PC-9 (cell line): ENCODE measurements at regions of chr15 and their contacts with region 1.

Region 1: GRCh38 chr15:92444631-92445030 is 51.0 kb downstream of the ST8SIA2 start:
- DNase-seq: no peak
- H3K4me3 ChIP-seq: no peak overlapping the region
- H3K27ac ChIP-seq: no peak overlapping the region
- H3K4me1 ChIP-seq: no peaks in the 10 kb centered on the region
- H3K27me3 ChIP-seq: peaks cover 11% of the 10 kb centered on the region; the same call in 1 of the 2 replicates
- CTCF ChIP-seq: no peak

Region 2: GRCh38 chr15:92123962-92124656 is 320.5 kb before region 1 on chr15:
- CTCF ChIA-PET with region 1: no interaction called
- POLR2A ChIA-PET with region 1: no interaction called
- intact Hi-C with region 1: no loop called
- DNase-seq: no peak
- H3K4me3 ChIP-seq: no peak overlapping the region
- H3K27ac ChIP-seq: no peak overlapping the region
- H3K4me1 ChIP-seq: no peaks in the 10 kb centered on the region
- H3K27me3 ChIP-seq: no peaks in the 10 kb centered on the region
- CTCF ChIP-seq: no peak

Region 3: DNA sequence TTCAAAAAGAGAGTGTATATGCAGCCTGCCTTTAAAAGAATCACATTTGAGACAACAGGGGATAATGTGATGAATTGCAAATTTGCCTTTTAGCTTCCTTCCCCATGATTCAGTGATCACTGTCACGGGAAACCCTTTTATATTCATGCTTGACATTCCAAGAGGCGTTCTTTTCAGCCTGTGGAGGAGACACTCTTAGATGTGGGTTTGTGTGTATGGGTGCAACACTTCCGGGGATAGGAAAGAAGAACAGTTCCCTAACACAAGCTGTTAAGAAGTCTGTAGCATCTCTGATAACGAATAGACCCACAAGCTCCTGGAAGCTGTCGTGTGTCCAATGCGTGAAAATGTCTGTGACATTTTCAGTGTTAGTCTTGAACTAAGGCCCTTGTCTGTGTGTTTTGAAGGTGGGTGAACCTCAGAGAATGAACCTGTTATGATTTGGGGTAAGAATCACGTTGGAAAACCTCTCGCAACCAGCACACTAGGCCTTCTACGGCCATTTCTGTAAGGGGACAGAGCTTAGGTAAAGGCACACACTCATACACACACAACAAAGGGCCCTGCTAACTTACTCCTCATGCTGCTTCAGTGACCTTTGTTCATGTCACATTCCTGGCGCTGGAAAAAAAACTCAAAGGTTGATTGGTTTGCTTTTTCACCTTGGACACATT is 280.2 kb before region 1 on chr15:
- CTCF ChIA-PET with region 1: no interaction called
- POLR2A ChIA-PET with region 1: no interaction called
- intact Hi-C with region 1: no loop called
- DNase-seq: no peak
- H3K4me3 ChIP-seq: no peak overlapping the region
- H3K27ac ChIP-seq: no peak overlapping the region
- H3K4me1 ChIP-seq: no peaks in the 10 kb centered on the region
- H3K27me3 ChIP-seq: no peaks in the 10 kb centered on the region
- CTCF ChIP-seq: no peak

Region 4: GRCh38 chr15:92398926-92399610 is 45.6 kb before region 1 on chr15:
- CTCF ChIA-PET with region 1: no interaction called
- POLR2A ChIA-PET with region 1: no interaction called
- intact Hi-C with region 1: loop called (anchors 2 kb)
- DNase-seq: no peak
- H3K4me3 ChIP-seq: no peak overlapping the region
- H3K27ac ChIP-seq: no peak overlapping the region
- H3K4me1 ChIP-seq: no peaks in the 10 kb centered on the region
- H3K27me3 ChIP-seq: peaks cover 26% of the 10 kb centered on the region; the same call in 1 of the 2 replicates
- CTCF ChIP-seq: no peak